ENCODE measurements at regions of chr2 and their contacts with region 1.

Region 1: GRCh38 chr2:190319555-190320498 is at the start of gene HIBCH:
- DNase-seq: peak; percentile 96
- H3K4me3 Mint-ChIP-seq: peak within 1 kb of the TSS; percentile 87
- H3K27ac Mint-ChIP-seq: peak within 1 kb of the TSS; percentile 94
- H3K4me1 Mint-ChIP-seq: peaks cover 52% of the 10 kb centered on the region
- H3K27me3 Mint-ChIP-seq: no peaks in the 10 kb centered on the region
- total RNA-seq, gene HIBCH: 33.9 to 37.8 TPM

Region 2: GRCh38 chr2:190214426-190215194 is 105.2 kb before region 1 on chr2:
- CTCF ChIA-PET with region 1: no interaction called
- POLR2A ChIA-PET with region 1: no interaction called
- intact Hi-C with region 1: no loop called
- DNase-seq: no peak
- H3K4me3 Mint-ChIP-seq: no peak overlapping the region
- H3K27ac Mint-ChIP-seq: no peak overlapping the region
- H3K4me1 Mint-ChIP-seq: no peaks in the 10 kb centered on the region
- H3K27me3 Mint-ChIP-seq: no peaks in the 10 kb centered on the region

Region 3: GRCh38 chr2:190343500-190344275 is 23.9 kb after region 1 on chr2 and contains the start of gene INPP1:
- CTCF ChIA-PET with region 1: interaction called, 9 read pairs
- POLR2A ChIA-PET with region 1: interaction called, 22 read pairs
- intact Hi-C with region 1: loop called (anchors 1 kb)
- DNase-seq: peak; percentile 65
- H3K4me3 Mint-ChIP-seq: peak within 1 kb of the TSS; percentile 85
- H3K27ac Mint-ChIP-seq: peak within 1 kb of the TSS; percentile 43
- H3K4me1 Mint-ChIP-seq: peaks cover 22% of the 10 kb centered on the region
- H3K27me3 Mint-ChIP-seq: no peaks in the 10 kb centered on the region
- total RNA-seq, gene INPP1: 15.8 to 16.3 TPM

Region 4: DNA sequence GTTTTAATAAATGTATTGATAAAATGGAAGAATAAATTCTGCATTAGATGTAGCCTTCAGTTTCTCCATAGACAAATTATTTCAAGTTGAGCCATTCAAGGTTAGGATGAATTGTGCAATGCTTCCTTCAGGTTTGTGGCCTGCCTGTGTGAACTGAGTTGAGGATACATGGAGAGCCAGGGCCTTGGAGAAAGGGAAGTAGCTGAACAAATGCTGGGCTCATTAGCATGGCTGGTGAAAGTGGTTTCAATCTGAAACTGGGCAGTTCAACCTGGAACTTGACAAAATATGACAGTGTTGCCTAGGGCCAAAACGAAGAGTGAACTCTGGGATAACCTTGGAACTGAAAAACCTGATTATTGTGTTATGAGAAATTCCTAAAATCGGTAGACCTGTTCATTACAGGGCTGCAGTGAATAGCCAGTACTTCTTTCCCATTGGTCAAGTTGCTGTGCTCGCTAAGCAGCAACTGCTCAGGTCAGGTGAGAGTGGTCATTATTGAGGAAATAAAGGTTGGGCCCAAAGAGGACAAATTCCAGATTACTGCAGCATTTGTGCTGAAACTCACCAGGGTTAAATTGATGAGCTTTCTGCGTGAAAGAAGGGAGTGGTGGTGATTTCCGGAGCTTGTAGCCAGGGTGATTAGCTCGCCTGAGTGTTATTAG is 36.3 kb after region 1 on chr2:
- CTCF ChIA-PET with region 1: no interaction called
- POLR2A ChIA-PET with region 1: no interaction called
- intact Hi-C with region 1: loop called (anchors 5 kb)
- DNase-seq: no peak
- H3K4me3 Mint-ChIP-seq: no peak overlapping the region
- H3K27ac Mint-ChIP-seq: no peak overlapping the region
- H3K4me1 Mint-ChIP-seq: peaks cover 17% of the 10 kb centered on the region
- H3K27me3 Mint-ChIP-seq: no peaks in the 10 kb centered on the region

Region 5: GRCh38 chr2:190376591-190377245 is 56.9 kb after region 1 on chr2:
- CTCF ChIA-PET with region 1: no interaction called
- POLR2A ChIA-PET with region 1: no interaction called
- intact Hi-C with region 1: loop called (anchors 1 kb)
- DNase-seq: no peak
- H3K4me3 Mint-ChIP-seq: no peak overlapping the region
- H3K27ac Mint-ChIP-seq: no peak overlapping the region
- H3K4me1 Mint-ChIP-seq: no peaks in the 10 kb centered on the region
- H3K27me3 Mint-ChIP-seq: no peaks in the 10 kb centered on the region

Region 6: GRCh38 chr2:191020221-191020741 is 700.5 kb after region 1 on chr2:
- CTCF ChIA-PET with region 1: no interaction called
- POLR2A ChIA-PET with region 1: no interaction called
- intact Hi-C with region 1: loop called (anchors 5 kb)
- DNase-seq: peak; percentile 97
- H3K4me3 Mint-ChIP-seq: no peak overlapping the region
- H3K27ac Mint-ChIP-seq: no peak overlapping the region
- H3K4me1 Mint-ChIP-seq: peaks cover 34% of the 10 kb centered on the region
- H3K27me3 Mint-ChIP-seq: peaks cover 2% of the 10 kb centered on the region